ENCODE measurements at regions of chr2 and their contacts with region 1.

Region 1: GRCh38 chr2:18514526-18515461 is 45.7 kb downstream of the RDH14 start:
- DNase-seq: no peak
- ATAC-seq: no peak

Region 2: GRCh38 chr2:18435421-18436037 is 79.3 kb before region 1 on chr2:
- intact Hi-C with region 1: loop called (anchors 5 kb)
- DNase-seq: no peak
- ATAC-seq: peak; percentile 61

Measured in Right ventricle myocardium superior (tissue), 1 donor.